B cell (primary cell): ENCODE measurements at regions of chrX and their contacts with region 1.

Region 1: DNA sequence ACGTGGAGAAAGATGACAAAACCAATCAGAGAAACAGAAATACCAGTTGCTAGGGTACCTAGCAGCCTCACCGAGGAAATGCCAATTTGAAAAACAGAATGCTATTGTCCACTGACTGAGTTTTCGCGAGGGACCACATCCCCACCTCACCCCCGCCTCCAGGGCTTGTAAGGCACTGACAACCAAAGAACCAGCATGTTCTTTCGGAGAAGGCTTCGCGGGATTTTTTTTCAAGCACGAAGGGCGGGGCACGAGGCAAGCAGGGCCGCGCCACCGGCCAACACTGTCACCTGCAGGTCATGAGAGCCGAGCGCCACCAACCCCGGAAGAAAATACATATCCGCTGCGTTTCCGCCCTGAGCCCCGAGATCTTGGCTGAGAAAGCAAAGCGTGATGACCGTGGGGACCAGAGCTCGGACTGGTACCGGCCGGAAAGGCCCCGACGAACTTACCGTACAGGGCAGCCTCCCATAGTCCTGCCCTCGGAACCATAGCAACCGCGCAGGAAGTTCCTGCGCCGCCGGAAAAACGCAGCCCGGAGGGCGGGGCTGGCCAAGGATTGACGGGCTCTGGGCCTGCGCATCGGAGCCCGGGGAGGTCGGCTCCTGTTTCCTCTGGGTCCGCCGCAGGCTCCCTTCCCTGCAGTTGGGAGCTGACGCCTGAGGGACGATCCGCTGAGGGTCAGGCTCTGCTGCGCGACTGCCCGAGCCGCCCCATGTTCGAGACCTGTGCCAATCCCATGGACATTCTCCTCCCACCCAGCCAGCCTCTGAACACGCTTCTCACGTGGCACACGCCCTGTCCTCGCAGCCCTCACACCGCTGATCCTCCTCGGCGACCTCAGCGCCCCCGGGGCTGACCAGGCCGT is 59.2 kb upstream of the PAGE5 start:
- DNase-seq: peak; percentile 92
- ATAC-seq: peak; percentile 90
- H3K4me3 ChIP-seq: peak overlapping the region; percentile 66 to 72 (median 70)
- H3K4me3 Mint-ChIP-seq: peak overlapping the region; percentile 92
- H3K27ac ChIP-seq: peak overlapping the region; percentile 91 to 93
- H3K27ac Mint-ChIP-seq: peak overlapping the region; percentile 98
- H3K4me1 ChIP-seq: peaks cover 2 to 5% of the 10 kb centered on the region in 2 donors
- H3K4me1 Mint-ChIP-seq: peaks cover 9% of the 10 kb centered on the region
- H3K27me3 ChIP-seq: no peaks in the 10 kb centered on the region
- H3K27me3 Mint-ChIP-seq: no peaks in the 10 kb centered on the region
- CTCF ChIP-seq: peak; percentile 69

Region 2: GRCh38 chrX:53422086-53422860 is 1738.6 kb before region 1 on chrX and contains the start of gene SMC1A:
- CTCF ChIA-PET with region 1: no interaction called
- POLR2A ChIA-PET with region 1: no interaction called
- intact Hi-C with region 1: loop called (anchors 10 kb)
- DNase-seq: peak; percentile 96
- ATAC-seq: peak; percentile 91
- H3K4me3 ChIP-seq: peak within 1 kb of the TSS; percentile 43 to 95 (median 93)
- H3K4me3 Mint-ChIP-seq: peak within 1 kb of the TSS; percentile 87
- H3K27ac ChIP-seq: peak within 1 kb of the TSS; percentile 96 to 98
- H3K27ac Mint-ChIP-seq: peak within 1 kb of the TSS; percentile 94
- H3K4me1 ChIP-seq: peaks cover 17 to 23% of the 10 kb centered on the region in 2 donors
- H3K4me1 Mint-ChIP-seq: peaks cover 31% of the 10 kb centered on the region
- H3K27me3 ChIP-seq: no peaks in the 10 kb centered on the region
- H3K27me3 Mint-ChIP-seq: no peaks in the 10 kb centered on the region
- CTCF ChIP-seq: no peak
- total RNA-seq, gene SMC1A: 67.6 and 70.0 TPM in 2 replicates

Region 3: GRCh38 chrX:54044126-54044876 is 1116.6 kb before region 1 on chrX and contains the start of gene PHF8:
- CTCF ChIA-PET with region 1: interaction called, 3 read pairs
- POLR2A ChIA-PET with region 1: no interaction called
- intact Hi-C with region 1: loop called (anchors 2 kb)
- DNase-seq: peak; percentile 96
- ATAC-seq: peak; percentile 80
- H3K4me3 ChIP-seq: peak within 1 kb of the TSS; percentile 68 to 86 (median 75)
- H3K4me3 Mint-ChIP-seq: peak within 1 kb of the TSS; percentile 97
- H3K27ac ChIP-seq: peak within 1 kb of the TSS; percentile 84 to 87
- H3K27ac Mint-ChIP-seq: peak within 1 kb of the TSS; percentile 95
- H3K4me1 ChIP-seq: peaks cover 9 to 13% of the 10 kb centered on the region in 2 donors
- H3K4me1 Mint-ChIP-seq: peaks cover 17% of the 10 kb centered on the region
- H3K27me3 ChIP-seq: no peaks in the 10 kb centered on the region
- H3K27me3 Mint-ChIP-seq: no peaks in the 10 kb centered on the region
- CTCF ChIP-seq: no peak
- total RNA-seq, gene PHF8: 73.2 and 79.3 TPM in 2 replicates

Region 4: DNA sequence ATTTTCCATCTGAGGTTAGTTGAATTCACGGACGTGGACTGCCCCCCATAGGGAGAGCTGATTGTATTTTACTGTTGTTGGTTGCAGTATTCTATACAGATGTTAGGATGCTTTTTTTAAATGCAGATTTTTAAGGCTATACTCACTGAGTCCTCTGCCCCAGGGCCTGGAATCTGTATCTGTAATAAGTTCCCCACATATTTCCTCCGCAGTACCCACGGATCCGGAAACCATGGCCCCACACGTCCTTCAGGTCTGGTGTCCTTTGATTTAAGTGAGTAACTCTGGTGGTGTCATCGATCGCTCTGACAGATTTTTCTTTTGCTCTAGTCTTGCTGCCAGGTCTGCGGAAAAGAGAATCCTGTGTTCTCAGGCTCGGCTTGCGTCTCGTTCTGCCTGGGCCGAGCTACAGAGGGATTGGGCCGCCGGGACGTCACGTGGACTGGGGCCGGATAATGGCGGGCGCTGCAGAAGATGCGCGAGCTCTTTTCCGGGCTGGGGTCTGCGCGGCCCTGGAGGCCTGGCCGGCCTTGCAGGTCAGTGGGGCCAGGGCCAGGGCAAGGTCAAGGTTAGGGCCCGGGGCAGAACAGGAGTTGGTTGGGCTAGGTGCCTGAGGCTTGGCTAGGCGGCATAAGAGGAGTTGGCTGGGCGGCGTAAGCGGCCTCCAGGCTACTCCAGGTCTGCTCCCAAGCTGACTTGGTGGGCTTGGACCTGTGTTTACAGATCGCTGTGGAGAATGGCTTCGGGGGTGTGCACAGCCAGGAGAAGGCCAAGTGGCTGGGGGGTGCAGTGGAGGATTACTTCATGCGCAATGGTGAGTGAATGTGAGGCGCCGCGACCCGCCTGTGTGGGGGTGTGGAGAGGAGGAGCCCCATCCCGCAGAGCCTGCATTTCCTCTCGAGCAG is 720.7 kb before region 1 on chrX and contains the start of gene TSR2:
- CTCF ChIA-PET with region 1: no interaction called
- POLR2A ChIA-PET with region 1: no interaction called
- intact Hi-C with region 1: loop called (anchors 1 kb)
- DNase-seq: peak; percentile 81
- ATAC-seq: peak; percentile 99
- H3K4me3 ChIP-seq: peak within 1 kb of the TSS; percentile 70 to 92 (median 84)
- H3K4me3 Mint-ChIP-seq: peak within 1 kb of the TSS; percentile 94
- H3K27ac ChIP-seq: peak within 1 kb of the TSS; percentile 50 to 70
- H3K27ac Mint-ChIP-seq: peak within 1 kb of the TSS; percentile 89
- H3K4me1 ChIP-seq: peaks cover 14 to 19% of the 10 kb centered on the region in 2 donors
- H3K4me1 Mint-ChIP-seq: peaks cover 25% of the 10 kb centered on the region
- H3K27me3 ChIP-seq: no peaks in the 10 kb centered on the region
- H3K27me3 Mint-ChIP-seq: no peaks in the 10 kb centered on the region
- CTCF ChIP-seq: no peak
- total RNA-seq, gene TSR2: 38.3 and 41.4 TPM in 2 replicates

Region 5: DNA sequence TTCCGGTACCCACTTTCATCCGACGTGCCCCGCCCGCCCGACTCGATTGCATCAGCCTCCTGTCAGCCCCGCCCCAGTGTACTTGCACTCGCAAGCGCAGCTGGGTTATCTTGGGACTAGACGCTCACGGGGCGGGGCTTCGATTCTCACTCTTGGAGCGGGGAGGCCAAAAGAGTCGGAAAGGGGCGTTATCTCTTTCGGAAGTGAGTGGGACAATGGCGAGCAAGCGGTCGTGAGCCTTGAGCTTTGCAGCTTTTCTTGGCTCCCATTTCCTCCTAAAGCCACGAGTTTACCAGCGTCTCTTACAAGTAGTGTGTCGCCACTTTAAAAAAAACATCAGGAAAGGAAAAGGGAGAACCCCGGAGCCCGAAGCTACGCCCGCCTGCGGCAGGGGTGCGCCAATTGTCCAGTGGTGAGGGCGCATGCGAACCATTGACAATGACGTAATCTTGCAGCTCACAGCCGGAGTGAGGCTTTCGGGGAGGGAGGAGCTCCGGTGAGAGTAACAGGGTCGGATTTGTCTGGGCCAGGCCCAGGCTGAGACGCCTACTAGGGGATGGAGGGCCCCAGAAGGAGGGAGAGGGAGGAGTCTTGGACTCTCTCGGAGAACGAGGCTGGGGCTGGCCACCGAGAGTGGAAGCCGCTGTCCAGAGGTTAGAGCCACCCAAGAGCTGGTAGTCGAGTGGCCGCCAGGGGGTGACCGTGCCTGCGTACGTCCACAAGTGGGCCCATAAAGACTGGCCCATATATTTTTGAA is 521.4 kb before region 1 on chrX:
- CTCF ChIA-PET with region 1: no interaction called
- POLR2A ChIA-PET with region 1: interaction called, 4 read pairs
- intact Hi-C with region 1: loop called (anchors 1 kb)
- DNase-seq: peak; percentile 94
- ATAC-seq: peak; percentile 85
- H3K4me3 ChIP-seq: peak overlapping the region; percentile 61 to 71 (median 66)
- H3K4me3 Mint-ChIP-seq: peak overlapping the region; percentile 96
- H3K27ac ChIP-seq: peak overlapping the region; percentile 98
- H3K27ac Mint-ChIP-seq: peak overlapping the region; percentile 99
- H3K4me1 ChIP-seq: peaks cover 0 to 12% of the 10 kb centered on the region in 2 donors
- H3K4me1 Mint-ChIP-seq: peaks cover 10% of the 10 kb centered on the region
- H3K27me3 ChIP-seq: no peaks in the 10 kb centered on the region
- H3K27me3 Mint-ChIP-seq: no peaks in the 10 kb centered on the region
- CTCF ChIP-seq: peak; percentile 59

Region 6: DNA sequence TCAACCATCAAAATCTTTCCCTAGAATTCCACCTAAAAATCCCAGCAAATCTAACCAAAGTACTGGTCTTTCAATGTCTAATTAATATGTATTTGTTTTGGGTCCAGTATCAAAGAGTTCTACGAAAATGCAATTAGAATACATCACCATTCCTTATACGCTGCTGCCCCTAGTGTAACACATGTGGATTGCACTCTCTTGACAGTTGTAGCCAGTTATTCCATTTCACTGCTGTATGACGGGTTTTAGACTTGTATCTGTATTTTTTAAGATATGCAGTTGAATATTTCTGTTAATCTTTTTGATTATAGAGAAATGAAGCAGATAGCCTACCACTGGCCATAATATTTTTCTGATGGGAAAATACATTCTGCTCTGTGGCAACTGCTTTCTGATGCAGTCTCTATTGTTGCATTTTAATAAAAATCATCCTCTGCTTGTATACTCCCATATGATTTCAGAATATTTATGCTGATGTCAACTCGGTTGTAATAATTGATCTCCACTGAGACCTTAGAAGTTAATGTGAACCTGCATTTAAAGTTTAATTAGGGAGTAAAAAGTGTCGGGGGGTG is 103.2 kb before region 1 on chrX:
- CTCF ChIA-PET with region 1: no interaction called
- POLR2A ChIA-PET with region 1: no interaction called
- intact Hi-C with region 1: loop called (anchors 2 kb)
- DNase-seq: peak; percentile 53
- ATAC-seq: peak; percentile 71
- H3K4me3 ChIP-seq: peak overlapping the region in 3 of 5 experiments; percentile 18 to 24 (median 18)
- H3K4me3 Mint-ChIP-seq: peak overlapping the region; percentile 78
- H3K27ac ChIP-seq: no peak overlapping the region
- H3K27ac Mint-ChIP-seq: no peak overlapping the region
- H3K4me1 ChIP-seq: peaks cover 6 to 7% of the 10 kb centered on the region in 2 donors
- H3K4me1 Mint-ChIP-seq: peaks cover 10% of the 10 kb centered on the region
- H3K27me3 ChIP-seq: no peaks in the 10 kb centered on the region
- H3K27me3 Mint-ChIP-seq: no peaks in the 10 kb centered on the region
- CTCF ChIP-seq: peak; percentile 77

Region 7: DNA sequence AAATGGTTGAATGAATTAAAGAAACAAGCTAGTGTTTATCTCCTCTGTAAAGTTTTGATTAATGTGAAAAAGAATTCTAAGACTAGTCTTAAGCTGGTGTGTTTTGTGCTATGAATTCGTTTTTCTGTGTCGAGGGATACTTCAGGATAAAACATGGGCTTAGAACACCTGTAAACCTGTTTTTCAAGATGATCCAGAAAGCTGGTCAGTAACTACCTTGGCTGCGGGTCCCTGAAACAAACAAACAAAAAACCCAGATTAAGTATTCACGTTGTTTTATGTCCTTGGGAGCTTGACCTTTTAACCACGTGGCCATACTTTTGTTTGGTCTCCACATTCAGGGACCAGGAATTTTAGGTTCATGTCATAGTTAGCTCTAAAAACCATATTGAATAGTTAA is 107.2 kb after region 1 on chrX:
- CTCF ChIA-PET with region 1: no interaction called
- POLR2A ChIA-PET with region 1: no interaction called
- intact Hi-C with region 1: no loop called
- DNase-seq: no peak
- ATAC-seq: no peak
- H3K4me3 ChIP-seq: no peak overlapping the region
- H3K4me3 Mint-ChIP-seq: no peak overlapping the region
- H3K27ac ChIP-seq: no peak overlapping the region
- H3K27ac Mint-ChIP-seq: no peak overlapping the region
- H3K4me1 ChIP-seq: no peaks in the 10 kb centered on the region
- H3K4me1 Mint-ChIP-seq: no peaks in the 10 kb centered on the region
- H3K27me3 ChIP-seq: no peaks in the 10 kb centered on the region
- H3K27me3 Mint-ChIP-seq: no peaks in the 10 kb centered on the region
- CTCF ChIP-seq: no peak

Region 8: DNA sequence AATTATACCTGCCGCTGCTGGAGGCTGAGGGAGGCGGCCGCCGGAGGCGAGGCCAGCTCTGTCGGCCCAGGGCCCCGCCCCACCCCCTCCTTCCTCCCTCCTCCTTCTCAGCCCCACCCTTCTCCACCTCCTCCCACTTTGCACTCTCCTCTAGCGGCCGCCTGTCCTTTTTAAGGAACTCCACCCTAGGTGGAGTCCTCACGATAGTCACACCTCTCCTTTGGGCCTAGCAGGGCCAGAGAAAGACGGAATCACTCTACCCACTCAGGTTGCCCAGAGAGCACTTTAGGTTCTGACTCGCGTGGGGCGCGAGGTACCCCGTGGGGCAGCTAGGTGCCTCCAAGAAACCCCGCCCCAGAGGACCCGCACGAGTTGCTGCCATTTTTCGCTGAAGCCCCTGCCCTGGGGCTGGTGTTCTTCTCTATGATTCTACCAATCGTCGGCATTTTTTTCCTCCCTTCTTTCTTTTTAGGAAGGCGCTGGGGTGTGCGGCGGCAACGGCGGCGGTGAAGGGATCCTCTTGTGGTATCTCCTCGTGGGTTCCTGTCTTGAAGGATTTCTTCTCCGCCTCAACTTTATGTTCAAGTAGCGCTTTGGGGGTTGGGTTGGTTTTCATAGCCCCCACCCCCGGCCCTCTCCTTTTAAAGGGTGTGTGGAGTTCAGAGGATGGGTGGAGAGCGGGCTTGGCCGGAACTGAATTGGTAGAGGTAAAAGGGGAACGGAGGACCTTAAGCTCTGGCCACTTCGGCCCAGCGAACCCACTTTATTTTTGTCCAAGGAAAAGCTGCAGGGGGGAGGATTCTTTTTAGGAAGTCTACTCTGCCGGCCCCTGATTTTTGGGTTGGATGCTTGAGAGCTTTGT is 1071.5 kb after region 1 on chrX and contains the start of gene KLF8:
- CTCF ChIA-PET with region 1: no interaction called
- POLR2A ChIA-PET with region 1: no interaction called
- intact Hi-C with region 1: loop called (anchors 2 kb)
- DNase-seq: peak; percentile 64
- ATAC-seq: peak; percentile 80
- H3K4me3 ChIP-seq: peak within 1 kb of the TSS; percentile 11 to 76 (median 58)
- H3K4me3 Mint-ChIP-seq: peak within 1 kb of the TSS; percentile 88
- H3K27ac ChIP-seq: peak within 1 kb of the TSS; percentile 50 to 64
- H3K27ac Mint-ChIP-seq: peak within 1 kb of the TSS; percentile 90
- H3K4me1 ChIP-seq: peaks cover 19 to 25% of the 10 kb centered on the region in 2 donors
- H3K4me1 Mint-ChIP-seq: peaks cover 37% of the 10 kb centered on the region
- H3K27me3 ChIP-seq: no peaks in the 10 kb centered on the region
- H3K27me3 Mint-ChIP-seq: no peaks in the 10 kb centered on the region
- CTCF ChIP-seq: no peak
- total RNA-seq, gene KLF8: 42.7 and 43.1 TPM in 2 replicates